ENCODE measurements at regions of chr4 and their contacts with region 1.

Region 1: GRCh38 chr4:114386637-114387233 is 211.9 kb upstream of the UGT8 start:
- DNase-seq: no peak
- H3K4me3 ChIP-seq: no peak overlapping the region
- CTCF ChIP-seq: peak; percentile 55

Region 2: DNA sequence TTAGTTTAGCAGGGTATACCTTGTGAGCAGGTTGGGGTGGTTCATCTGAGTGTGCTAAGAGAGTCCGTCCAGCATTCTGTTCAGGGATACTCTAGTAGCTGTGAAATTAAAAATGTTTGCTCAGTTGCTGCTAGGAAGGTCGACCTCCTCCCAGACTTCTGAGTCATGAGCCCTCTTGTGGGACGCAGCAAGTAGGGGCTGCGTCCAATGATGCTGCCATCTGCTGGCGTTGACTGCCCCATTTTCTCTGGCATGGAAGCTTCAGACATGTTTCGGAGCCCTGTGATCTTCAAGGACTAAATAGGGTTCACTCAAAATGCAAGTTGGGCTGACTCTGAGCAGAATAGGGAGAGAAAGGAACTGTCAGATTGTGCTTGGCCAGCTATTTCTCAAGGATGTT is 206.3 kb before region 1 on chr4:
- CTCF ChIA-PET with region 1: interaction called, 12 read pairs
- POLR2A ChIA-PET with region 1: no interaction called
- DNase-seq: peak; percentile 51
- H3K4me3 ChIP-seq: no peak overlapping the region
- CTCF ChIP-seq: peak; percentile 81

Region 3: DNA sequence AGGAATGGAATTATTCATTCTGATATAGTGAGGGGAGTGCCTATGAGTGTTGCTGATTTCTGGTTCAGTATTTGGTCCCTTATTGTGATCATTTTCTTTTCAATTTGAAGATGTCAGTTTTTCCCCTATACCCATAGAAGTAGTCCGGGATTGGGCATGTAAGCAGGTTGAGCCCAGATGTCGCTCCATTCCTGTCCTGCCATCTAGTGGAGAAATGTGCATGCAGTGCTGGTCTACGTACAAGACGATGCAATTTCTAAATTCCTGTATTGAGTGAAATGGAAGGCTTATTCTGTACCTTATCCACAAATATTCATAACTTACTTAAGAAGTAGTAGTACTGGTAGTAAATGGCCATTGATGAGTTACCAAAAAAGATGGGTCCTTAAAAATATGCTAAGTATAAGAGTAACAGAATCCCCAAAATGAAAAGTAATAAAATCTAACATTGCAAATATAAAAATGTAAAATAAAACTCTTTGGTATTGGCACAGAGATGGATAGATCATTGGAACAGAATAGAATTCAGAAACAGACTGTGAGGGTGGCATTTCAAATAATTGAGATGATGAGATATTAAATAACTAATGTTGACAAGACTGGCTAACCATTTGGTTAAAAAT is 272.8 kb after region 1 on chr4:
- CTCF ChIA-PET with region 1: interaction called, 23 read pairs
- POLR2A ChIA-PET with region 1: no interaction called
- DNase-seq: peak; percentile 1
- H3K4me3 ChIP-seq: no peak overlapping the region
- CTCF ChIP-seq: peak; percentile 84

Region 4: DNA sequence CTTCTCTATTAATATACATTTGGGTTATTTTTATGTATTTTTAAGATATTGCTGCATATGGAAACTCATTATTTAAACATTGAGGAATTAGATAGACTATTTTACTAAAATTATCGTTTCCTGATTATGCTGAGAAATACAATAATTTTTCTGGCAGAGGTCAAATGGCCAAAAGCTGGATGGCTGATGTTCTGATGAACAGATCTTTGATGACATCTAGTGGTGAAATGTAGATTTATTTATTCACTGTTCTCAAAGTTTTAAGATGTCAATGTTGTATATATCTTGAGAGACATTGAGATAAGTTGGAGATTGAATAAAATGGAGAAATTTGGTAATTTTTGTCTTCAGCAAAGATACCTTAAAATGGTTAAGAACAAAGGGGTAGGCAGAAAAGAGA is 308.0 kb after region 1 on chr4:
- CTCF ChIA-PET with region 1: interaction called, 36 read pairs
- POLR2A ChIA-PET with region 1: no interaction called
- DNase-seq: no peak
- H3K4me3 ChIP-seq: no peak overlapping the region
- CTCF ChIP-seq: peak; percentile 32

Region 5: GRCh38 chr4:114807759-114808404 is 421.1 kb after region 1 on chr4:
- CTCF ChIA-PET with region 1: interaction called, 10 read pairs
- POLR2A ChIA-PET with region 1: no interaction called
- DNase-seq: no peak
- H3K4me3 ChIP-seq: no peak overlapping the region
- CTCF ChIP-seq: peak; percentile 86

Region 6: GRCh38 chr4:114879916-114880669 is 493.4 kb after region 1 on chr4:
- CTCF ChIA-PET with region 1: no interaction called
- POLR2A ChIA-PET with region 1: no interaction called
- DNase-seq: no peak
- H3K4me3 ChIP-seq: no peak overlapping the region
- CTCF ChIP-seq: no peak

Measured in AG04449 (cell line).